ENCODE measurements at regions of chr19 and their contacts with region 1.

Region 1: GRCh38 chr19:44164673-44165512 is at the start of gene ZNF226:
- DNase-seq: peak; percentile 98
- H3K4me3 ChIP-seq: peak within 1 kb of the TSS; percentile 56 to 87 (median 66)
- H3K27ac ChIP-seq: peak within 1 kb of the TSS; percentile 74
- H3K4me1 ChIP-seq: peaks cover 3% of the 10 kb centered on the region
- H3K27me3 ChIP-seq: no peaks in the 10 kb centered on the region
- CTCF ChIP-seq: no peak
- POLR2A ChIP-seq: no peak
- total RNA-seq, gene ZNF226: 19.7 and 19.8 TPM in 2 replicates

Region 2: GRCh38 chr19:44025217-44025936 is 139.5 kb before region 1 on chr19 and contains the start of gene ZNF222:
- CTCF ChIA-PET with region 1: no interaction called
- POLR2A ChIA-PET with region 1: interaction called, 12 read pairs
- dilution Hi-C with region 1: no loop called
- intact Hi-C with region 1: no loop called
- DNase-seq: peak; percentile 88
- H3K4me3 ChIP-seq: peak within 1 kb of the TSS; percentile 76 to 91 (median 88)
- H3K27ac ChIP-seq: peak within 1 kb of the TSS; percentile 70
- H3K4me1 ChIP-seq: no peaks in the 10 kb centered on the region
- H3K27me3 ChIP-seq: peaks cover 2 to 3% of the 10 kb centered on the region in 2 experiments
- CTCF ChIP-seq: no peak
- POLR2A ChIP-seq: peak; percentile 61
- total RNA-seq, gene ZNF222: 4.7 and 5.2 TPM in 2 replicates

Region 3: DNA sequence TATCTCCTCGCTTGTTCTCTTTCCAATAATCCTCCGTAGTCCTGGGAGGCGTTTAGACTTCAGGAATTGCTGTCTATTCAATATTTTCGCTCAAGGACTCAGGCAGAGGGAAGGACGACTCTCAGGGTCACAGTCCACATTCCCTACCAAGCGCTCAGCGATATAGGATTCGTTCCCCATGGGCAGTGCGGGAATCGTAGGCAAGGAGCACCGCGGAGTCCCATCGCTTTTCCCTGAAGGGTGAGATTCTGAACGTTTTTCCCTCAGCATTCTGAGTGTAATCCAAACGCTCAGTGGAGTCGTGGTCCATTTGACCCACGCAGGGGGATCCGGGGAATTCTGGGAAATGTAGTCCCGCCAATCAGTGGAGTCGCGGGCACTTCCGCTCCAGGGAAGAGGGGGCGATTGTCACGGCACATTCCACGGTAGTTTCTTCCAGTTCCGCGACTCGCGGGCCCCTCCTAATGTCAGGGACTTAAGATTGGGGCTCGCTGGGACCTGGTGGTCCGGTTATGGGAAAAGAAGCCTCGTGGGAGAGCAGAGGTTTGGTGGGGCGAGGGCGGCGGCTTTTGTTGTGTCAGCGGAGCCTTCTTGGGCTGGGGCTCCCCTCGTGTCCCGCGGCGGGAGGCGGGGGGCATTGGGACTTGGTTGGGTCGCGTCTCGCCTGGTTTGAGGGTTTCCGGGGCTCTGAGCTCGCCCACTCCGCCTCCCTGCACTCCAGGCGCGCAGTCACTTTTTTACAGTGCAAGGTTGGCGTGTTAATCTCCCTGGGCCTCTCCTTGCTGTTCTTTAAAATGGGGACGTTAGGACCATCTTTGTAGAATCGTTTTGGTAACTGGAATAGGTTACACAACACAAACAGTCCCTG is 23.5 kb before region 1 on chr19 and contains the start of gene ZNF234:
- CTCF ChIA-PET with region 1: no interaction called
- POLR2A ChIA-PET with region 1: no interaction called
- dilution Hi-C with region 1: no loop called
- intact Hi-C with region 1: loop called (anchors 1 kb)
- DNase-seq: peak; percentile 83
- H3K4me3 ChIP-seq: peak within 1 kb of the TSS; percentile 64 to 71 (median 67)
- H3K27ac ChIP-seq: peak within 1 kb of the TSS; percentile 14
- H3K4me1 ChIP-seq: peaks cover 6% of the 10 kb centered on the region
- H3K27me3 ChIP-seq: no peaks in the 10 kb centered on the region
- CTCF ChIP-seq: no peak
- POLR2A ChIP-seq: peak; percentile 59
- total RNA-seq, gene ZNF234: 10.6 and 11.9 TPM in 2 replicates

Region 4: GRCh38 chr19:44176590-44176989 is 11.7 kb after region 1 on chr19:
- CTCF ChIA-PET with region 1: no interaction called
- POLR2A ChIA-PET with region 1: no interaction called
- dilution Hi-C with region 1: no loop called
- intact Hi-C with region 1: no loop called
- DNase-seq: no peak
- H3K4me3 ChIP-seq: no peak overlapping the region
- H3K27ac ChIP-seq: no peak overlapping the region
- H3K4me1 ChIP-seq: no peaks in the 10 kb centered on the region
- H3K27me3 ChIP-seq: no peaks in the 10 kb centered on the region
- CTCF ChIP-seq: no peak
- POLR2A ChIP-seq: no peak

Region 5: GRCh38 chr19:44207126-44207803 is 42.4 kb after region 1 on chr19:
- CTCF ChIA-PET with region 1: interaction called, 5 read pairs
- POLR2A ChIA-PET with region 1: interaction called, 9 read pairs
- dilution Hi-C with region 1: no loop called
- intact Hi-C with region 1: loop called (anchors 1 kb)
- DNase-seq: peak; percentile 91
- H3K4me3 ChIP-seq: peak overlapping the region; percentile 69 to 93 (median 87)
- H3K27ac ChIP-seq: peak overlapping the region; percentile 65
- H3K4me1 ChIP-seq: peaks cover 3% of the 10 kb centered on the region
- H3K27me3 ChIP-seq: no peaks in the 10 kb centered on the region
- CTCF ChIP-seq: no peak
- POLR2A ChIP-seq: peak; percentile 82

Region 6: DNA sequence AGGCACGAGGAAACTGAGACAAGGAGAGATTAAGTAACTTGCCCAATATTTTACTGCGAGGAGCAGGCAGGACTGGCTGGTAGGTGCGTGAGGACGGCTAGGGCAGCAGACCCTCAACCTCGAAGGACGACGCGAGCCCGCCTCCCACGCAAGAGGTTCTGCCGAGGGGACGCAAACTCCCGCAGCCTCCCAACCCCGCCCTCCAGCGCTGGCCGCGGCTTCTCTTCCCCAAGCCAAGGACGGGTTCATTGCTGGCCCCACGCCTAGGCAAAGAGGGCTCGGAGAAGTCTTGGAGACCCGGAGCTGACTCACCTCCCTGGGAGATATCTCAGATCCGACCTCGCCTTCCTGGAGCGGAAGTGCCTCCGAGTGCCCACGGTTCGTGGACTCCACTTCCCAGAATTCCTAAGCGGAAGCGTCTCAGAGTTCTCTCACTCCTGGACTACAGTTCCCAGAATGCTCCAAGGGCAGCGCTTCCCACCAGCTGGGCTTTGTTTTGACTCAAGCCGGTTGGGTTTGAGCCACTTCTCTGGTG is 139.8 kb after region 1 on chr19 and contains the start of gene ZNF235:
- CTCF ChIA-PET with region 1: interaction called, 4 read pairs
- POLR2A ChIA-PET with region 1: interaction called, 3 read pairs
- dilution Hi-C with region 1: no loop called
- intact Hi-C with region 1: loop called (anchors 10 kb)
- DNase-seq: peak; percentile 97
- H3K4me3 ChIP-seq: peak within 1 kb of the TSS; percentile 76 to 95 (median 82)
- H3K27ac ChIP-seq: peak within 1 kb of the TSS; percentile 63
- H3K4me1 ChIP-seq: peaks cover 5% of the 10 kb centered on the region
- H3K27me3 ChIP-seq: no peaks in the 10 kb centered on the region
- CTCF ChIP-seq: no peak
- POLR2A ChIP-seq: peak; percentile 51
- total RNA-seq, gene ZNF235: 5.2 TPM in 2 replicates

Region 7: DNA sequence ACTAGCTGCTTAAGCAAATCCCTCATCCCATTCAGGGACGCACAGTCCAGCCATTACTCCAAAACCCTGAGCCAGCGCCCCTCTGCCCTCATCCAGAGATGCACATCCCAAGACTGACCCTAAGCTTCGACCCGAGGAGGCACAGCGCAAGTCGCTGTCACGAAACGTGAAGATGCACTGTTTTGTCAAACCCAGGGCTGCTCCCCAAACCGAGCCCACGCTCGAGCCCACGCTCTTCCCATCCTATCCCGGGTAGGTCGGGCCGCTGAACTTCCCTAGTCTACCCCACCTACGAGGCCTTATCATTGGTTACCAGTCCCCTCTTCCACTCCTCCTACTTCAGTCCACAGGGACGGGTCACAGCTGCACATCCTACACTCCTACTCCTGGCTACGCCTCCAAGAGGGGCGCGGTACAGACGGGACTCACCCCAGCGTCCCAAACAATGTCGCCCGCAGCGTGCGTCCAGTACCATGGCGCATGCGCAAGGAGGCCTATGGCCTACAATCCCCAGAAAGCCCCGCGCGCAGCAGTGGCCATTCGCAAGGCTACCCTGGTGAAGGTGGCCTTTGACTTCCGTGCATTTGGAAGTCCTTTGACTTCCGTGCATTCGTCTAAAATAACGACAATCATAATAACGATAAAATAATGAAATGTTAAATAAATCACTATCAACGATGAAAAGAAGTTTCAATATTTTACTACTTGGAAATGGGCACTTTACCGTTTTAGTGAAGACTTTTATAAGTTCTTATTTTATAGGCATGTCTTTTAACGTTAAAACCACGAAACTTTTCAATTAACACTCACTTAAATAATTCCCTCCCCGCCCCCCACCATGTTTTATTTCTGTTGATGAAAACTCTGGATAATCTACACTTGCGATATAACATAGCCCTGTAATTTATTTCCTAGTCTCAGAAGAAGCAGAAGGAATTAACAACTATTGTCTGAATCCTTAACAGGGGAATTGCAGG is 236.5 kb after region 1 on chr19 and contains the start of gene ZNF285:
- CTCF ChIA-PET with region 1: no interaction called
- POLR2A ChIA-PET with region 1: no interaction called
- dilution Hi-C with region 1: no loop called
- intact Hi-C with region 1: loop called (anchors 1 kb)
- DNase-seq: peak; percentile 98
- H3K4me3 ChIP-seq: peak within 1 kb of the TSS; percentile 46 to 66 (median 55)
- H3K27ac ChIP-seq: no peak within 1 kb of the TSS
- H3K4me1 ChIP-seq: no peaks in the 10 kb centered on the region
- H3K27me3 ChIP-seq: no peaks in the 10 kb centered on the region
- CTCF ChIP-seq: no peak
- POLR2A ChIP-seq: peak; percentile 19
- total RNA-seq, gene ZNF285: 3.6 and 4.6 TPM in 2 replicates

Region 8: DNA sequence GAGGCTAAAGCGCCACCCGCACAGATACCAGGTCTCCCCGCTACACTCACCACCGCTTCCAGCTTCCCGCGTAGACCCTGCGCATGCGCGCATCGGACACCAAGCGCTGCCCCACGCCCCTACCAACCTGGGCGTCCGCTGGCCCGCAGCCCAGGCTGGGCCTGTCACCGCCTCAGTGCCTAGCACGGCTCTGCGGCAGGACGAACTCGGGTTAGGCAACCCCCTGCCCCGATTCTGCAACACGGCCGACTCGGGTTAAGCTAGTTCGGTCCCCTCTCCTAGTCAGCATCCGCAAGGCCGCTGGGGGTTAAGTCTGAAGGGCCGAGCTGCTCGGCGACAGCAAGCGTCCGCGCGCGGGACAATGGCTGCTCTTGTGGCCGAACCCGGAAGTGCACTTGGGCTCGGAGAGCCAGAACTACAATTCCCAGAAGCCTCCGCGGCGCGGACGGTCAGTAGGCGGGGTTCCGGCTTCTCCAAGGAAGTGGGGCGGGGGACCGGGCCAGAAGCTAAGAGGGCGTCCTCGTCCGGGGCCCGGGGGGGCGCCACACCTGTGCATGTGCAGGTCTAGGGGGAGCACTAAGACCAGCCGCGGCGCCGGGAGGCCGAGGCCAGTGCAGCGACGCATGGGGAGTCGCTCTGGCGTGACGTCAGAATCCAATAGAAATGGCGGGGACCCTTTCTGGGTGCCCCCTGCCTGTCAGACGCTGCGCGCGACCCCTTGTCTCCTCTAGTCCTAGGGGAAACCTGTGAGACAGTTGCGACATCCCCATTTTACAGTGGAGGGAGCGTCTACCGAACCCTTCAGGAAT is 335.5 kb after region 1 on chr19 and contains the start of gene ZNF180:
- CTCF ChIA-PET with region 1: no interaction called
- POLR2A ChIA-PET with region 1: interaction called, 3 read pairs
- dilution Hi-C with region 1: no loop called
- intact Hi-C with region 1: loop called (anchors 1 kb)
- DNase-seq: peak; percentile 96
- H3K4me3 ChIP-seq: peak within 1 kb of the TSS; percentile 75 to 88 (median 77)
- H3K27ac ChIP-seq: peak within 1 kb of the TSS; percentile 59
- H3K4me1 ChIP-seq: peaks cover 11% of the 10 kb centered on the region
- H3K27me3 ChIP-seq: peaks cover 0 to 2% of the 10 kb centered on the region in 2 experiments
- CTCF ChIP-seq: peak; percentile 14 to 53
- POLR2A ChIP-seq: peak; percentile 77
- total RNA-seq, gene ZNF180: 8.6 and 8.9 TPM in 2 replicates

Region 9: GRCh38 chr19:45200568-45200994 is 1035.7 kb after region 1 on chr19:
- CTCF ChIA-PET with region 1: no interaction called
- POLR2A ChIA-PET with region 1: no interaction called
- dilution Hi-C with region 1: no loop called
- intact Hi-C with region 1: no loop called
- DNase-seq: peak; percentile 73
- H3K4me3 ChIP-seq: no peak overlapping the region
- H3K27ac ChIP-seq: no peak overlapping the region
- H3K4me1 ChIP-seq: peaks cover 4% of the 10 kb centered on the region
- H3K27me3 ChIP-seq: no peaks in the 10 kb centered on the region
- CTCF ChIP-seq: peak; percentile 52 to 60
- POLR2A ChIP-seq: no peak

Measured in endothelial cell of umbilical vein (primary cell).